Activated CD8-positive, alpha-beta T cell treated with anti-CD3 and anti-CD28 coated beads for 36 hours (primary cell): ENCODE measurements at regions of chr16 and their contacts with region 1.

Region 1: GRCh38 chr16:68328151-68328859 is 17.5 kb downstream of the PRMT7 start:
- DNase-seq: peak; percentile 85
- ATAC-seq: peak; percentile 99
- H3K4me3 Mint-ChIP-seq: no peak overlapping the region
- H3K27ac Mint-ChIP-seq: peak overlapping the region; percentile 41
- H3K4me1 Mint-ChIP-seq: peaks cover 31% of the 10 kb centered on the region
- H3K27me3 Mint-ChIP-seq: no peaks in the 10 kb centered on the region
- CTCF ChIP-seq: peak; percentile 94

Region 2: DNA sequence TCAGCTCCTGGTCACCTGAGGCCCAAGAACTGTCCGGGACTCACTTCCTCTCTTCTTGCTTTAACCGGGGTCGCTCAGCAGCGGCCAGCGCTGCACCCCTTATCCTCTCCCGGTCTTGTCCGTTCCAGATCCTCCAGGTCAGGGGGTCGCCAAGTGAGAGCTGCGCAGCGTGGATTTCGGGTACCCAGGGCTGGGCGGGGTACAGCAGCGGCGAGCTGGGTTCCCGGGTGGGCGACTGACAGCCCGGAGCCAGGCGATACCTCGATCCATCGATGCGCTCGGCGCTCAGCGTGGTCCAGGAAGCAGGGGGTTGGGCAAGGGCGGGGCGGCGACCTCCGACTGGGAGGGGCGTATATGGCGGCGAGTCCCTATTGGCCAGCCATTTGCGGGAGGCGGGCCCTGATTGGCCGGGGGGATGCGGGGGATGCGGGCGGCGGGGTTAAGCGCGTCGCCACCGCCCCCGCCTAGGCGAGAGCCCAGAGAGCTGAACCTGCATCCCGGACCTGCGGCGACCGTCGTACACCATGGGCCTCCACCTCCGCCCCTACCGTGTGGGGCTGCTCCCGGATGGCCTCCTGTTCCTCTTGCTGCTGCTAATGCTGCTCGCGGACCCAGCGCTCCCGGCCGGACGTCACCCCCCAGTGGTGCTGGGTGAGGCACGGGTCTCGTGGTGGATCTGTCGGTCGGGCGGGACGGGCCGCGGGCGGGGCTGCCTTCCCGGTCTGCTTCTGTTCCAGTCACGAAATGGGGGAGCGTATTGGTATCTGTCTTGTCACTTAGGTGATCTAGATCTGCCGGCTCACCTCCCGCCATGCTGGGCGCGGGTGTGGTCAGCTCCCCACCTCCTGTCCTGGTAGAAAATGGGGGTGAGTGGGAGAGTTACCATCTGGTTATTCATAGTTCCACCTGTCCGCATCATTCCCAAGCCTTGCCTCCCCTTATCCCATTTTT is 83.1 kb before region 1 on chr16 and contains the start of gene PLA2G15:
- CTCF ChIA-PET with region 1: interaction called, 43 read pairs
- POLR2A ChIA-PET with region 1: interaction called, 9 read pairs
- intact Hi-C with region 1: no loop called
- DNase-seq: peak; percentile 97
- ATAC-seq: peak; percentile 99
- H3K4me3 Mint-ChIP-seq: peak within 1 kb of the TSS; percentile 83
- H3K27ac Mint-ChIP-seq: peak within 1 kb of the TSS; percentile 82
- H3K4me1 Mint-ChIP-seq: peaks cover 18% of the 10 kb centered on the region
- H3K27me3 Mint-ChIP-seq: no peaks in the 10 kb centered on the region
- CTCF ChIP-seq: no peak
- total RNA-seq, gene PLA2G15: 6.7 to 6.8 TPM

Region 3: GRCh38 chr16:68264128-68265077 is 63.9 kb before region 1 on chr16 and contains the start of gene SLC7A6:
- CTCF ChIA-PET with region 1: interaction called, 444 read pairs
- POLR2A ChIA-PET with region 1: interaction called, 56 read pairs
- intact Hi-C with region 1: loop called (anchors 1 kb)
- DNase-seq: peak; percentile 92
- ATAC-seq: peak; percentile 71
- H3K4me3 Mint-ChIP-seq: peak within 1 kb of the TSS; percentile 90
- H3K27ac Mint-ChIP-seq: peak within 1 kb of the TSS; percentile 99
- H3K4me1 Mint-ChIP-seq: peaks cover 43% of the 10 kb centered on the region
- H3K27me3 Mint-ChIP-seq: no peaks in the 10 kb centered on the region
- CTCF ChIP-seq: peak; percentile 89
- total RNA-seq, gene SLC7A6: 73.8 to 76.9 TPM

Region 4: DNA sequence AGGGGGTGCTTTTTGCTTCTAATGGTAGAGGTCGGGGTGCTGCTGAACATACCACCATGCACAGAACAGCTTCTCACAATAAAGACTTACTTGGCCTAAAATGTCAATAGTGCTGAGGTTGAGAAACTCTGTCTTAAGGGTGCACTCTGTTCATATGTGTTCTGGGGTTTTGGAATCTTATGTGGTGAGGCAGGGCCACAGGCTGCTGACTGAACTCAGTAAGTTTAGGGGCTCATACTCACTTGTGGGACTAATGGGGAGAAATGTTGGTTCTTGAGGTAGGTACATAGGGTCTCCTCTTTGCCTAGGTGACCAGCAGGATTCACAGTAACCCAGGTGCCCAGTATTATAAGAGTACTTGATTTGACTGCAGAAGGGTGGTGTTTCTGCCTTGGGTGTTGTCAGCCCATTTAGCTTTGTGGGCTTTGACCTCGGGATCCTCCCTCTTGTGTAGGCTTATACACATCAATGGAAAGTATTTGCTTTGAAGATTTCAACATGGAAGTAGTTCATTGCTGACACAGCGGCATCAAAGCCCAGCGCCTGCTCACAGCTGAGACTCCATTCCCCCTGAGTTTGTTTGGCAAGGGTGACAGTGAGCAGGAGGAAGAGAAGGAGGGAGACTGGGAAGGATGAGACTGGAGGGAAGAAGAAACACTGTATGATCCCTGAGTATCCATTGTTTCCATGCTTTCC is 46.8 kb before region 1 on chr16:
- CTCF ChIA-PET with region 1: interaction called, 32 read pairs
- POLR2A ChIA-PET with region 1: no interaction called
- intact Hi-C with region 1: no loop called
- DNase-seq: no peak
- ATAC-seq: peak; percentile 14
- H3K4me3 Mint-ChIP-seq: no peak overlapping the region
- H3K27ac Mint-ChIP-seq: peak overlapping the region; percentile 95
- H3K4me1 Mint-ChIP-seq: peaks cover 69% of the 10 kb centered on the region
- H3K27me3 Mint-ChIP-seq: no peaks in the 10 kb centered on the region
- CTCF ChIP-seq: no peak

Region 5: DNA sequence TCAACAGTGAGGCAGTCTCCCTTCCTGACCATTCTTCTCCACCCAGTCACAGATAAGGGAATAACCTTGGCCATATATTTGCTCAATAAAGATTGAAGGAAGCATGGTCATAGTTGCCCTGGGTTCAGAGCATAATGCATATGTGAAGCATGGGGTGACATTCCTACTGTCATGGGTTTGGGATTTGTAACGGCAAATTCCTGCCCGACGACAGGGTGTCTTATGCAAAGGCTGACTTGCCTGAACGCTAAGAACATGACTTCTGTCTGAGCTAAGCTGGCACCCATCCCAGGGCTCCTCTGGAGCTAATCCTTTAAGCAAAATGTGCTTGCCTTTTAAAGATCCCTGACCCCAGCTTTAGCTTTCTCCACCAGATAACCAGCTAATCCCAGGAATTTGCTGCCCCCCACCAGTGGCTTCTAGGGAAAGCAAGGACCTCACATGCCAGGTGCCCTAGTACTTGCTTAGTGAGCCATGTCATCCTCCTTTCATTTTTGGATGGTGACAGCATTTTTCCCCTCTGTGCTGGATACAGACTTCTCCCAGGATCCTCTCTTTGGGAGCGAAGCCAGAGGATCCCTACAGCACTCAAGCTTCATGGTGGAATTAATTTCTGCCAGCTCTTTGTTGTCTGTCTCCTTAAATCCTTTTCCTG is 29.3 kb before region 1 on chr16:
- CTCF ChIA-PET with region 1: interaction called, 14 read pairs
- POLR2A ChIA-PET with region 1: interaction called, 4 read pairs
- intact Hi-C with region 1: no loop called
- DNase-seq: no peak
- ATAC-seq: no peak
- H3K4me3 Mint-ChIP-seq: no peak overlapping the region
- H3K27ac Mint-ChIP-seq: peak overlapping the region; percentile 71
- H3K4me1 Mint-ChIP-seq: peaks cover 6% of the 10 kb centered on the region
- H3K27me3 Mint-ChIP-seq: no peaks in the 10 kb centered on the region
- CTCF ChIP-seq: no peak

Region 6: DNA sequence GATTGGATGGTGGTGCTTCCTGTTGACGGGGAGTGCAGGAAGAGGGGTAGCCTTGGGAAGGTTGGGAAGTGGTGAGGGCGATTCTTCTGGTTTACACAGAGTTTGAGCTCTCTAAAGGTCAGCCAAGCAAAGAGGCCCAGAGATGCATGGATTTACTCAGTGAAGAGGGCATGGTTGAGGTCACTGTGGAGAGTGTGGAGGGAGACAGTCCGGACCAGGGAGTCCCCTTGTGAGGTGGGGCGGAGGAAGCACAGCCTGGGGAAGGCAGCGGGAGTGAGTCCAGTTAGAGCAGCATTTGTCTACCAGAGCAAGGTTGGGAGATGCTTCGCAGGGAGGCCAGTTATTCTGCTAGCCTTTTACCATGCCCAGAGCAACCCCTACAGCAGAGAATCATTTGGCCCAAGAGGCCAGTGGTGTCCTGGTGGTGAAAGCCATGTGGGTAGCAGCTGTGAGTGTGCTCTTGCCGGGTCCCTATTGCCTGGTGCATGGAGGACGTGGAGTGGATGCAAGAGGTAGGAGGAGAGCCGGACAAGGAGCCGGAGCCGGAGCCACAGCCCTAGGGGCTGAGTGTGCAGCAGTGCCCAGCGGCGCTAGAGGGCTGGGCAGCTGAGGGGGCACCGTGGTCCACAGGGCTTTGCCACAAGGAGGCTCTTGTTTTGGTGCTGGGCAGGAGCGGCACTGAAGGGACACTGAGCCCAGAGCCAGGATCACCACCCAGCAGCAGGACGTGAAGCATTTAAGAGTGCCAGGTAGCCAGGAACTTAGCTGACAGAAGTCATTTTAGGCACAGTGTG is 10.2 kb after region 1 on chr16:
- CTCF ChIA-PET with region 1: interaction called, 23 read pairs
- POLR2A ChIA-PET with region 1: interaction called, 4 read pairs
- intact Hi-C with region 1: no loop called
- DNase-seq: no peak
- ATAC-seq: no peak
- H3K4me3 Mint-ChIP-seq: no peak overlapping the region
- H3K27ac Mint-ChIP-seq: no peak overlapping the region
- H3K4me1 Mint-ChIP-seq: no peaks in the 10 kb centered on the region
- H3K27me3 Mint-ChIP-seq: no peaks in the 10 kb centered on the region
- CTCF ChIP-seq: no peak

Region 7: GRCh38 chr16:68978271-68978954 is 650.1 kb after region 1 on chr16:
- CTCF ChIA-PET with region 1: no interaction called
- POLR2A ChIA-PET with region 1: no interaction called
- intact Hi-C with region 1: no loop called
- DNase-seq: no peak
- ATAC-seq: no peak
- H3K4me3 Mint-ChIP-seq: no peak overlapping the region
- H3K27ac Mint-ChIP-seq: no peak overlapping the region
- H3K4me1 Mint-ChIP-seq: no peaks in the 10 kb centered on the region
- H3K27me3 Mint-ChIP-seq: no peaks in the 10 kb centered on the region
- CTCF ChIP-seq: no peak